PC-9 (cell line): ENCODE measurements at regions of chr1 and their contacts with region 1.

Region 1: GRCh38 chr1:62613325-62613727 is 16.0 kb downstream of the ANGPTL3 start:
- DNase-seq: no peak
- H3K4me3 ChIP-seq: no peak overlapping the region
- H3K27ac ChIP-seq: no peak overlapping the region
- H3K4me1 ChIP-seq: no peaks in the 10 kb centered on the region
- H3K27me3 ChIP-seq: no peaks in the 10 kb centered on the region
- CTCF ChIP-seq: no peak

Region 2: DNA sequence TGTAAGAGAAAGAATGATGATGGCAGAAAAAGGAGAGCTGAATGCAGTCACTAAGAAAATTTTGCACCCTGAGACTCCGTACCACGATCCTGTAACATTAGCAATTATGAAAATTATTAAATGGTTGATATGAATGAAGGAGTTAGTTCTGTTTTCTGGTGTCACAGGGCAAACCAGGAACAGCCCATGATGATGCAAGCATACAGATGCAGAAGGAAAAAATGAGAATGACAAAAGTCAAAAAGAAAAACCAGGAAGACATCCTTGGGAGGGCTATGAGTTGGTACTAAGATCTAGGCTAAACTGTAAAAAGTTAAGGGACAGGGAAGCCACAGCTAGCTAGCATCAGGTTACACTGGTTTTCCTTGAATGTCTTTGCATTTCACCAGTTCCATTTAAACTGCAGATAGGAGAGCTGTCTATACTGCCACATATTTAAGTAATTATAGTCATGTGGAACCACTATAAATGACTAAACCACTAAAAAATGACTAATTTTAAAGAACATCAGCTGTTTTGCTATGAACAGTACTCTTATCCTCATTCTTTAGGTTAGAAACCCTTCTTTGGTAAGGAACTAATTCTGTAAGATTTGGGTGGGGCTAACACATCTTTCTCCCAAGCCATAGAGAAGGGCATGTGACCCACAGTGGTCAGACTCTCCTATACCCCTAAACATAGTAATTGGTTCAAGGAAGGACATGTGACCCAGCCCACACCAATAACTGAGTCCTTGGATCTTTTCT is 63.5 kb after region 1 on chr1:
- CTCF ChIA-PET with region 1: no interaction called
- POLR2A ChIA-PET with region 1: no interaction called
- intact Hi-C with region 1: no loop called
- DNase-seq: no peak
- H3K4me3 ChIP-seq: no peak overlapping the region
- H3K27ac ChIP-seq: no peak overlapping the region
- H3K4me1 ChIP-seq: 0 out of 2 replicates have a peak, but pooled peaks cover 4% of the 10 kb centered on the region
- H3K27me3 ChIP-seq: no peaks in the 10 kb centered on the region
- CTCF ChIP-seq: no peak

Region 3: DNA sequence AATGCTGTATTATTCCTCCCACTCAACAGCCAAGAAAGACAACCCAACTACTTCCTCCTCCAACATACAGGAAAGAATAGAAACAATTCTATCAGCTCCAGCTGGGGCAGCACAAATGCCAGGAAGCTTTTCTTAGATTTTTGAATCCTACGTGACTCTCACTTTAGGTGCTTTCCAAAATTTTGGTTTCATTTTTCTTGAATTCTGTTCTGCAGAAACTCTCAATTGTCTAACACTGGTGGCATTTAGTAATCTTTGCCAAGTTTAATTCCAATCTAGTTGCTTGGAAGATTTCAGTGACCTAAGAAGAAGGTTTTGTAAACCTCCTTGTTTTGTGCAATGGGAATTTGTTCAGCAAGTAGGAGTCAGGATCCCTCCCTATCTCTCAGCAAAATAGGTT is 111.9 kb after region 1 on chr1:
- CTCF ChIA-PET with region 1: no interaction called
- POLR2A ChIA-PET with region 1: no interaction called
- intact Hi-C with region 1: loop called (anchors 10 kb)
- DNase-seq: no peak
- H3K4me3 ChIP-seq: no peak overlapping the region
- H3K27ac ChIP-seq: no peak overlapping the region
- H3K4me1 ChIP-seq: no peaks in the 10 kb centered on the region
- H3K27me3 ChIP-seq: no peaks in the 10 kb centered on the region
- CTCF ChIP-seq: no peak

Region 4: GRCh38 chr1:63289135-63289534 is 675.8 kb after region 1 on chr1:
- CTCF ChIA-PET with region 1: no interaction called
- POLR2A ChIA-PET with region 1: no interaction called
- intact Hi-C with region 1: no loop called
- DNase-seq: no peak
- H3K4me3 ChIP-seq: no peak overlapping the region
- H3K27ac ChIP-seq: no peak overlapping the region
- H3K4me1 ChIP-seq: no peaks in the 10 kb centered on the region
- H3K27me3 ChIP-seq: no peaks in the 10 kb centered on the region
- CTCF ChIP-seq: no peak